Head of caudate nucleus (tissue), 42 donors: ENCODE measurements at regions of chr7 and their contacts with region 1.

Region 1: DNA sequence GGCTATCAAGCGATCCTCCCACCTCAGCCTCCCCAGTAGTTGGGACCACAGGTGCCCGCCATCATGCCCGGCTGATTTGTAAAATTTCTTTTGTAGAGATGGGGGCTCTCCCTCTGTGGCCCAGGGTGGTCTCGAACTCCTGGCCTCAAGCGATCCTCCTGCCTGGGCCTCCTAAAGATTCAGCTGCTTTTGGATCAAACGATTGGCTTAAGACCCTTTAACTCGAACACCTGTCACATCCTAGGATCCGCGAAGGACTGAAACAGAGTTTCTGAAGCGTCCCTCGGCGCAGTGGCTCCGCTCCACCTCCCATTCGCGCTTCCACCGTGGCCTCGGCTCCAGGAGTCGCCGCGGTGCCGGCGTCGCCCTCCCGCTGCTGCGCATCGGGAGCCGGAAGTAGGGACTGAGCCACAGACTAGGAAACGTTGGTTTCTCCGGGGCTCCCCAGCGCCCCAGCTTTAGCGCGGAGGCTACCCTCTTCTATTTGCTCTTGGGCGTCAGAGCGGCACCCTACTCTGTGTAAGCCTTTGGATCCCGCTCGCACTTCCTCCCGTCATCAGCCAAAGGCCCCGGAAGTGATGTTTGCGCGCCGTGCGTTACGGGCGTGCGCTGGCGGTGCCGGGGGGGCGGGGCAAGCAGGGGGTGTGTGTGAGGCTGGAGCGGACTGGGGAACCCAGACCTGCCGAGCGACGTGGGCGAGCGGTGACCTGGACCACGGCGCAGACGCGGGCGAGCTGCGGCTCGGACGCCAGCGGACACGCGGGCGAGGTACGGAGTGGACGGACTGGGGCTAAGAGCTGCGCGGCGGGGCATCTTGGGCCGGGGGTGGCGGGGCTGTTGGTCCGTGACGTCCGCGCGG is 53.0 kb downstream of the KCTD7 start:
- DNase-seq: peak; percentile 94 to 99 (median 97)

Region 2: DNA sequence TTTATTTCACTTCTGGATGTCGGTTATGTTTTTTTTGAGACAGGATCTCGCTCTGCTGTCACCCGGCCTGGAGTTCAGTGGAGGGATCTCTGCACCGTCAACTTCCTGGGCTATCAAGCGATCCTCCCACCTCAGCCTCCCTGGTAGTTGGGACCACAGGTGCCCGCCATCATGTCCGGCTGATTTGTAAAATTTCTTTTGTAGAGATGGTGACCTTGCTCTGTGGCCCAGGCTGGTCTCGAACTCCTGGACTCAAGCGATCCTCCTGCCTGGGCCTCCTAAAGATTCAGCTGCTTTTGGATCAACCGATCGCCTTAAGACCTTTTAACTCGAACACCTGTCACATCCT is 58.2 kb after region 1 on chr7:
- intact Hi-C with region 1: loop called (anchors 10 kb)
- DNase-seq: peak in 5 of 42 donors; percentile 3 to 38 (median 11)